WTC11 (cell line): ENCODE measurements at regions of chr7 and their contacts with region 1.

Region 1: DNA sequence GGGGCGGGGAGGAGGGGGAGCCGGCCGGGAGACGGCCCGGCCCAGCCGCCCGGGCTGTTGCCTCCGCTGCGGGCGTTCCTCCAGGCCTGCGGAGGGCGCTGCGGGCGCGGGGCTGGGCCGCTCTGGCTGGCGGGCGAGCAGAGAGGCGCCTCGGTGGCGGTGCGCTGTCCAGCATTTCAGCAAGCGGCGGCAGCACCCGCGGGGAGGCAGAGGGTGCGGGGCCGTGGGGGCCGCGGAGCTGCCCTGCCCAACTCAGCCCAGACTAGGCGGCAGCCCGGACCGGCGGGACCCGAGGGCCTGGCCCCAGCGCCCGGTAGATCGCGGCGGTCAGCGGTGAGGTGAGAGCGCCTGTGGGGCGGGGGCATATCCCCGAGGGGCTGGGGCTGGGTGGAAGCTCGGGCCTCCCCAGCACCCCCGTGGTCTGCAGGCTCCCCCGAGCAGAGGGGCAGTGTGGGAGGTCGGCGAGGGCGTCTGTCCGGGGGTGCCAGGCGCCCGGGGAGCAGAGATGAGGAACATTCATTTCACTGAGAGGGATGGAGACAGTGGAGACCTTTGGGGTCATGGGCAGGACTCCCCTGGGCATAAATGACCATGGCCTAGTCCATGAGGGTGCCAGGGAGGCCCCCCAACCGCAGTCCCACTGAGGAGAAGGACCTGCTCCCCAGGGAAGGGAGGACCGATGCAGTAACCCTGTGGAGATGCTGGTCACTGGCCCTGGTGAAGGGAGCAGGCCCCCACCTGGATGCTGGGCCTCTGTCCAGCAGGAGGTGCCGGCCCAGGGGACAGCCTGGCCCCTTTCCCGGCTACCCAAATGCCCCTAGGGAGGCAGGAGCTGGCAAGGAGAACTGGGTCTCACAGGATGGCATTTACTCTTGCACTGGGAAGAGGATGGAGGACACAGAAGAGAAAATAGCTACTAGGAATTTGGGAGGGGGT is at the start of gene SRRM3:
- DNase-seq: peak; percentile 91
- ATAC-seq: peak; percentile 73
- H3K4me3 Mint-ChIP-seq: peak within 1 kb of the TSS; percentile 66
- H3K27ac Mint-ChIP-seq: no peak within 1 kb of the TSS
- H3K4me1 Mint-ChIP-seq: peaks cover 31% of the 10 kb centered on the region
- H3K27me3 Mint-ChIP-seq: peaks cover 22% of the 10 kb centered on the region
- CTCF ChIP-seq: peak; percentile 54; the same call in 1 of the 2 replicates
- total RNA-seq, gene SRRM3: 17.7 to 24.6 TPM (median 20.7 TPM) in 3 replicates

Region 2: DNA sequence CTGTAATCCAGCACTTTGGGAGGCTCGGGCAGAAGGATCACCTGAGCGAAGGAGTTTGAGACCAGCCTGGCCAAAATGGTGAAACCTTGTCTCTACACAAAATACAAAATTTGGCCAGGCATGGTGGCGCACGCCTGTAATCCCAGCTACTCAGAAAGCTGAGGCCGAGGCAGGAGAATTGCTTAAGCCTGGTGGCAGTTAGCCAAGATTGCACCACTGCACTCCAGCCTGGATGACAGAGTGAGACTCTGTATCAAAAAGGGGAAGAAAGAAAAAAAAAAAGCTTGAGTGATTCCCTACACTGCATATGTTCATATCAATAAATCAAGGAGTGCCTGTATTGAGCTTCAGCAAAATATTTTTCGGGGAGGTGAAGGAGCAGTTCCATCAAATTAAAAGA is 46.1 kb before region 1 on chr7:
- CTCF ChIA-PET with region 1: no interaction called
- POLR2A ChIA-PET with region 1: no interaction called
- DNase-seq: no peak
- ATAC-seq: no peak
- H3K4me3 Mint-ChIP-seq: no peak overlapping the region
- H3K27ac Mint-ChIP-seq: no peak overlapping the region
- H3K4me1 Mint-ChIP-seq: peaks cover 4% of the 10 kb centered on the region; the same call in 1 of the 2 replicates
- H3K27me3 Mint-ChIP-seq: no peaks in the 10 kb centered on the region
- CTCF ChIP-seq: no peak

Region 3: DNA sequence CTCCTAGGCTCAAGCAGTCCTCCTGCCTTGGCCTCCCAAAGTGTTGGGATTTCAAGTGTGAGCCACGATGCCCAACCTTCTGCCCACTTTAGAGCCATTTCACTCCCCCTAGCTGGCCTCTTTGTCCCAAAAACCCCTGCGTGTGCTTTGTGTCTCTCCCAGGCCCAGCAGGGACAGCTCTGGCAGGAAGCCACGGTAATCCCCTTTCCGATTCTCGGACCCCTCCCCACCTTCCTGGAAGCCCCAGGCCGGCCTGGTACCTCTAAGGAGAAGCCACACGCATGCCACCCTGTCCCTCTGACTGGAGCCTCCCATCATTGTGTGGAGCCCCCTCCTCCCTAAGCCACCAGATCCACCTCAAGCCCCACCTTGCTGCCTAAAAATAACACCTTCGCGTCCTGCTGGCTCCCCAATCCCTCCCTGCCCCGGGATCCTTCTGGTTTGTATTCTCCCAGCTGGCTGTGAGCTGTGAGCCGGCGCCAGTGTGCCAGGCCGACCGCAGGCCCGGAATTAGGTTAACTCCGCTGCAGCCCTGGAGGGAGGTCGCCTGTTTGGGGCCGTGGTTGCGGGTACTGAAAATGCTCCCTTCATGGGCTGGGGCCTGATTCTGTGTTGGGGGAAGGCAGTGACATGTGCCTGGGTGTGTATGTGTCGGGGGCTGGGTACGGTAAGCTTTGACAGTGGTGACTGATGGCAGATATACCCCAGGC is 16.7 kb before region 1 on chr7:
- CTCF ChIA-PET with region 1: interaction called, 13 read pairs
- POLR2A ChIA-PET with region 1: interaction called, 3 read pairs
- DNase-seq: no peak
- ATAC-seq: peak; percentile 74
- H3K4me3 Mint-ChIP-seq: no peak overlapping the region
- H3K27ac Mint-ChIP-seq: peak overlapping the region; percentile 68
- H3K4me1 Mint-ChIP-seq: peaks cover 10% of the 10 kb centered on the region
- H3K27me3 Mint-ChIP-seq: no peaks in the 10 kb centered on the region; the same call in 1 of the 2 replicates
- CTCF ChIP-seq: no peak

Region 4: DNA sequence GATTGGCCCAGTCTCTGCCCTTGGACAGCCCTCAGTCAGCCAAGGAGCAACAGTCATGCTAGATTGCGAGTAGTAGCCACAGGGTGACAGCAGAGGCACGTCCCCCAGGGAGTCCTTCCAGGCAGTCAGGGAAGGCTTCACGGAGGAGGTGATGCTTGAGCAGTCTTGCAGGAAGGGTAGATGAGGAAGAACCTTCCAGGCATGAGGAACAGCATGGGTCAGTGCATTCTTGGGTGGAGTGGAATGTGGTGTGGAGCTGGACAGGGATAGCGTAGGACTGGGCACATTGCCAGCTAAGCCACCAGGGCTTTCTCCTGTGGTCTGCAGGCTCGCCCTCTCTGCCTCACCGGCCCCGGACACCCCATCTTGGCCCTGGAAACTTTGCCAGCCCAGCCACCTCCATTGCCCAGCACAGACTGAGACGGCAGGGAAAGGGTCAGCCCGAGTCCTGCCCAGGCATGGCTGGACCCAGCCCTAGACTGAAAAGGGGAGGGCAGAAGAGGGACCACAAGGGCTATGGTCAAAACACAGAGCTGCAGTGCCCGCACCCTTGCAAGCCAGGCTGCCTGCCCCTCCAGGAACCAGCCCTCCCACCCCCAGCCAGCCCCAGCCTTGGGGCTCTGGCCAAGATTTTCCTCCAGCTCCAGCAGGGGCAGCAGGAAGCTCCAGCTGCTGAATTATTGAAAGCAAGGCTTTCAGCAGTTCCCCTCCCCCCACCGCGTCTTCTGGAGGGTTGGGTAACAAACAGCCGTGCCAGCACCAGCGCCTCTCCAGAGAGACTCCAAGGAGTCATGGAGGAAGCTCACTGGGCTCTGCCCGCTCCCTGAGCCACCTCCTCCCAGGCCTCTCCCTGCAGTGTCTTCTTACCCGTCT is 18.4 kb after region 1 on chr7:
- CTCF ChIA-PET with region 1: interaction called, 21 read pairs
- POLR2A ChIA-PET with region 1: interaction called, 3 read pairs
- DNase-seq: peak; percentile 84
- ATAC-seq: peak; percentile 56
- H3K4me3 Mint-ChIP-seq: no peak overlapping the region; the same call in 1 of the 2 replicates
- H3K27ac Mint-ChIP-seq: peak overlapping the region; percentile 84; the same call in 1 of the 2 replicates
- H3K4me1 Mint-ChIP-seq: peaks cover 76% of the 10 kb centered on the region
- H3K27me3 Mint-ChIP-seq: no peaks in the 10 kb centered on the region; the same call in 1 of the 2 replicates
- CTCF ChIP-seq: no peak